Psoas muscle (tissue), 8 donors: ENCODE measurements at regions of chr12 and their contacts with region 1.

Region 1: DNA sequence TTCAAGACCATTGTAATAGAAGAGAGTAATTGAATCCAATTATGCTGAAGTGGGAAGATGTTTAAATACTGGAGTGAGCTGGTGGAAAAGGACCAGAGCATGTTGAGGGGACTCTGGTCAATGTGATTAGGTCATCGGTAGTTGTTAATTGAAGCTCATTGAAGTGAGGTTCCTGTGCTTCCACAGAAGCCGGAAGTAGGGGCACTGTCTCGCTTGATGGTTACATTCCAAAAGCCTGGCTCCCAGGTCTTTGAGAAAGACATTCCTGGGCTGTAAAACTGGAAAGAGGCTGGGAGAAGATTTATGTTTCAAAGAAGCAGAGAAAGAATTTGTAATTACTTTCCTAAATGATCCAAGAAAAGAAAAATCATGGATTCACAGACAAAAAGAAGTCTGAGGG is 12.3 kb upstream of the CLECL1 start:
- DNase-seq: no peak
- ATAC-seq: no peak
- H3K4me3 ChIP-seq: no peak overlapping the region
- H3K27ac ChIP-seq: no peak overlapping the region
- H3K4me1 ChIP-seq: no peaks in the 10 kb centered on the region
- H3K27me3 ChIP-seq: no peaks in the 10 kb centered on the region
- CTCF ChIP-seq: no peak

Region 2: DNA sequence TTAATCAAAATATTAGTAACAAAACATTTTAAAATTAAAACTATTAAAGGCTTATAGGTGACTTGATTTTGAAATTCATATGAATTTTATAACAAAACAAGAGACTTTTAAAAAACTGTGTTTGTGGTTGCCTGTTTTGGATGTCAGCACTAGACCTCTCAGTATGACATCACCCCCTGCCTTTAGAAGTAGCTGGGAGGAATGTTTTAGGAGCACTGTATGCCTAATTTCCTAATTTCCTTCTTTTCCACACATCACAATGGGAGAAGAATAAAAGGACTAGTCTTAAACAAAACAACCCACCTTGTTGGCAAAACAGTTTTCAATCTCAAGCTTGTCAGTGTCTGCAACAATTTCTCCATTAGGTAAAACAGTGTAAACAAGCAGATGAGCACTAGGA is 488.9 kb before region 1 on chr12:
- intact Hi-C with region 1: no loop called
- DNase-seq: no peak
- ATAC-seq: no peak
- H3K4me3 ChIP-seq: no peak overlapping the region
- H3K27ac ChIP-seq: no peak overlapping the region
- H3K4me1 ChIP-seq: no peaks in the 10 kb centered on the region
- H3K27me3 ChIP-seq: peaks cover 0 to 2% (median 0%) of the 10 kb centered on the region in 3 donors
- CTCF ChIP-seq: no peak

Region 3: DNA sequence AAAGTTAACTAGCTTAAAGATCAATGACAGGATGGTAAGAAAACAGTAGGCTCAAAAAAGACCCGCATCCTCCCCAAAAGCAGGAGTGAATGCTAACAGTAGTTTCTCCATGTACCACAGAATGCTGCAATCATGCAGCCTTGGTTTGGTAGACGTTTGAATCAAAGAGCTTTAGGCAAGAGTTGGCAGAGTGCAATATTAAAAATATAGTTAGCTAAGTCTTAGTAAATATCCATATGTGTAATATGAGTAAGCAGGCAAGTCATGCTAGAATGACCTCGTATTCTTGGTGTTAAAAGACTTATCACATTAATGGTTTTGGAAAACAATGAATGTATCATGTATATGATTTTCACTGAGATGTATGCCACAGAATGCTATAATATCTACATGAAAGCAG is 63.3 kb after region 1 on chr12:
- intact Hi-C with region 1: loop called in 1 of 2 experiments (anchors 5 kb)
- DNase-seq: no peak
- ATAC-seq: no peak
- H3K4me3 ChIP-seq: no peak overlapping the region
- H3K27ac ChIP-seq: no peak overlapping the region
- H3K4me1 ChIP-seq: peaks cover 7% of the 10 kb centered on the region
- H3K27me3 ChIP-seq: no peaks in the 10 kb centered on the region
- CTCF ChIP-seq: no peak

Region 4: DNA sequence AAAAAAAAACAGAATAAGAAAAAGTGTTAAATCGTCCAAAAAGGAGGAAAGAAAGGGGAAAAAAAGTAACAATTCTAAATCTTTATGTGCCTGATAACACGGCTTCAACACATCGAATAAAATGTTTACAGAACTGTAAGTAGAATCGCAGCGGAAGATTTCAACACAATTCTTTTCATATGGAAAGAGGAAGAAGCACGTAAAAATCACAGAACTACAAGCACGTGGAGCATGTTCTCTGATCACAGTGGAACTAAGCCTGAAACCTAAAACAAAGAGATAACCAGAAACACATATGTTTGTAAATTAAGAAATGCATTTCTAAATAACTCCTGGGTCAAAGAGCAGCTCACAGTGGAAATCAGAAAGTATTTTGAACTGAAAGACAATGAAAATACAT is 376.1 kb after region 1 on chr12:
- intact Hi-C with region 1: no loop called
- DNase-seq: no peak
- ATAC-seq: no peak
- H3K4me3 ChIP-seq: no peak overlapping the region
- H3K27ac ChIP-seq: no peak overlapping the region
- H3K4me1 ChIP-seq: no peaks in the 10 kb centered on the region
- H3K27me3 ChIP-seq: no peaks in the 10 kb centered on the region
- CTCF ChIP-seq: no peak

Region 5: DNA sequence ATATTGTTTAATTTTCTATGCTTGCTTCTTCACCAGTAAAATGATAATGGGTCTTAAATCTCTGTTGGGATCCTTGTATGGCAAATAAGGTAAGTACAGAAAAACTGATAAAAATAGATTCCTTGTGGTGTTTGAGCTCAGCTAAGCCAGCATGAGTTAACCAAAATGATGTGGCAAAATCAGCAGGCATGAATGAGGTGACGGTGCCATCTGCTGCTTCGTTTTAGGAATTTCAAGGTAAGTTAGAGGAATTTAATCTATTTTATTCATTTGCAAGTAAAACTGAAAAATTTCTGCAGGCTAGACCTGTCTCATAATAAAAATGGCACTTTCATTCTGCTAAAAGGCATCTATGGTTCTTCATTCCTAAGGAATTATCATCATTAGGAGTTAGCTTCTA is 394.8 kb after region 1 on chr12:
- intact Hi-C with region 1: loop called in 1 of 2 experiments (anchors 5 kb)
- DNase-seq: no peak
- ATAC-seq: no peak
- H3K4me3 ChIP-seq: no peak overlapping the region
- H3K27ac ChIP-seq: no peak overlapping the region
- H3K4me1 ChIP-seq: no peaks in the 10 kb centered on the region
- H3K27me3 ChIP-seq: peaks cover 0 to 2% (median 0%) of the 10 kb centered on the region in 3 donors
- CTCF ChIP-seq: peak; percentile 45